Activated naive CD4-positive, alpha-beta T cell treated with anti-CD3 and anti-CD28 coated beads for 36 hours (primary cell): ENCODE measurements at regions of chr6 and their contacts with region 1.

Region 1: DNA sequence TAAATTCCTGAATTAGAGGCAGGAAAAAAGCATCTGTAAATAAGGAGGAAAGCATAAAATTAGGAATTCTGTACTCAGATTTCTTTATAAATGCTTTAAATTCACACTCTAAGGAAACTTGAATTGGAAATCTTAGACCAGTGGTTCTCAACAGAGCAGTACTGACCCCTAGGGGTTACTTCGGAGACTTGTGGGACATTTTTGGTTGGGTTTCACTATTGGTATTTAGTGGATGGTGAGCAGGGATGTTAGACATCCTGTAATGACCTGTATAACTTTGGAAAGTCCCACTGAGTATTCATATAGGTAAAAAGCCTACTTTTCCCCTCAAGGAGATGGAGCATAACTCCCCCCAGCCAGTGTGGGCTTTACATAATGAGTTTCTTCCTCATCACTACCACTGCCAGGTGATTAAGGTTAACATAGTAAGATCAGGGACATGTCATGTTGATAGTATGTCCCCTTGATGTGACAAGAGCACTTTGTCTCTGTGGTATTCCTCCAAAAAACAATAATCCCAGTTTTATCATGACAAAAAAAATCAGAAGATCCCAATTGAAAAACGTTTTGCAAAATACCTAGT is 31.0 kb downstream of the GLO1 start:
- DNase-seq: peak; percentile 56
- H3K4me3 Mint-ChIP-seq: no peak overlapping the region
- H3K27ac Mint-ChIP-seq: peak overlapping the region; percentile 66
- H3K4me1 Mint-ChIP-seq: peaks cover 45% of the 10 kb centered on the region
- H3K27me3 Mint-ChIP-seq: no peaks in the 10 kb centered on the region

Region 2: GRCh38 chr6:37791156-37791919 is 880.6 kb before region 1 on chr6:
- CTCF ChIA-PET with region 1: no interaction called
- intact Hi-C with region 1: loop called (anchors 1 kb)
- DNase-seq: peak; percentile 95
- H3K4me3 Mint-ChIP-seq: no peak overlapping the region
- H3K27ac Mint-ChIP-seq: no peak overlapping the region
- H3K4me1 Mint-ChIP-seq: peaks cover 11% of the 10 kb centered on the region
- H3K27me3 Mint-ChIP-seq: no peaks in the 10 kb centered on the region

Region 3: GRCh38 chr6:38034274-38034914 is 637.6 kb before region 1 on chr6:
- CTCF ChIA-PET with region 1: no interaction called
- intact Hi-C with region 1: loop called (anchors 5 kb)
- DNase-seq: peak; percentile 7
- H3K4me3 Mint-ChIP-seq: no peak overlapping the region
- H3K27ac Mint-ChIP-seq: no peak overlapping the region
- H3K4me1 Mint-ChIP-seq: peaks cover 51% of the 10 kb centered on the region
- H3K27me3 Mint-ChIP-seq: no peaks in the 10 kb centered on the region

Region 4: GRCh38 chr6:38570750-38571149 is 101.2 kb before region 1 on chr6:
- CTCF ChIA-PET with region 1: no interaction called
- intact Hi-C with region 1: loop called (anchors 1 kb)
- DNase-seq: no peak
- H3K4me3 Mint-ChIP-seq: no peak overlapping the region
- H3K27ac Mint-ChIP-seq: no peak overlapping the region
- H3K4me1 Mint-ChIP-seq: peaks cover 23% of the 10 kb centered on the region
- H3K27me3 Mint-ChIP-seq: no peaks in the 10 kb centered on the region

Region 5: GRCh38 chr6:38713812-38714211 is 41.8 kb after region 1 on chr6:
- CTCF ChIA-PET with region 1: no interaction called
- intact Hi-C with region 1: loop called (anchors 2 kb)
- DNase-seq: peak; percentile 77
- H3K4me3 Mint-ChIP-seq: no peak overlapping the region
- H3K27ac Mint-ChIP-seq: no peak overlapping the region
- H3K4me1 Mint-ChIP-seq: peaks cover 17% of the 10 kb centered on the region
- H3K27me3 Mint-ChIP-seq: peaks cover 18% of the 10 kb centered on the region